Activated CD4-positive, alpha-beta T cell treated with anti-CD3 and anti-CD28 coated beads, Interleukin-2, amount 10 ng/mL, durations not matched to agents 24 days and 14 days (primary cell): ENCODE measurements at regions of chr21 and their contacts with region 1.

Region 1: GRCh38 chr21:37424396-37424795 is 57.8 kb downstream of the DYRK1A start:
- DNase-seq: no peak
- H3K4me3 Mint-ChIP-seq: no peak overlapping the region
- H3K27ac Mint-ChIP-seq: no peak overlapping the region
- H3K4me1 Mint-ChIP-seq: peaks cover 33% of the 10 kb centered on the region
- H3K27me3 Mint-ChIP-seq: no peaks in the 10 kb centered on the region

Region 2: GRCh38 chr21:37463083-37463801 is 38.8 kb after region 1 on chr21:
- intact Hi-C with region 1: loop called (anchors 5 kb)
- DNase-seq: peak; percentile 77
- H3K4me3 Mint-ChIP-seq: no peak overlapping the region
- H3K27ac Mint-ChIP-seq: peak overlapping the region; percentile 48
- H3K4me1 Mint-ChIP-seq: peaks cover 46% of the 10 kb centered on the region
- H3K27me3 Mint-ChIP-seq: no peaks in the 10 kb centered on the region